Activated naive CD4-positive, alpha-beta T cell treated with anti-CD3 and anti-CD28 coated beads for 36 hours (primary cell): ENCODE measurements at regions of chr12 and their contacts with region 1.

Region 1: DNA sequence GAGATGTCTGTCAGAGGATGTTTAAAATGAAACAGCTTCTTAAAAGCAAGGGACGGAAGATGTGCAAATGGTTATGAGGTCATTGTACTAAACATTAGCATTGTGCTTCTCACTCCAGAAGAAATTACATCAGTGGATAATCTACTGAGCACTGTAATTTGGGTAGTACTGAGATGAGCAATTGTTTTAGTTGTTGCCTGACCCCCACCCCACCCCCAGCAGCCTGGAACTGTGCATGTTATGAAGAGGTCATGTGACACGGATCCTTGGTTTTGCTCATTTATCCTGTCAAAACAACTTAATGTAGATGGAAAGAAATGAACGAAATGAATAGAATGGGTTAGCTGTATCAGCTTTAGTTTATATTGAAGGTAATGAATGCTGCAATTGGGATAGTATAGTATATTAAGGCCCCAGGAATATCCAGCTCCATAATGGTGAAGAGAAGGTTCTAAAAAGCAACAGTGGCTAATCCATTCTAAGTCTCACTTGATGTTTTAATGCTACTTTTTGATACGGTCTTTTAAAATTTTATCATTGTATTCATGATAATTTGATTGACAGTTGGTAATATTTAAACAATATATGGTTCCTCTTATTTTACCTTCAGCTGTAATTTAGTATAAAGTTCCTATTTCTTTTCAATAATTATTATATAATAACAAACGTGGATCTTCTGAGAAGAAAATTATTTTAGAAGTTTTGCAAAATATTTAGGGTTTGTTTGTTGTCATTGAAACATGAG is 58.5 kb downstream of the WNK1 start:
- DNase-seq: peak; percentile 77
- H3K4me3 Mint-ChIP-seq: no peak overlapping the region
- H3K27ac Mint-ChIP-seq: peak overlapping the region; percentile 54
- H3K4me1 Mint-ChIP-seq: peaks cover 64% of the 10 kb centered on the region
- H3K27me3 Mint-ChIP-seq: no peaks in the 10 kb centered on the region

Region 2: GRCh38 chr12:569803-570434 is 240.9 kb before region 1 on chr12:
- CTCF ChIA-PET with region 1: interaction called, 50 read pairs
- intact Hi-C with region 1: loop called (anchors 1 kb)
- DNase-seq: peak; percentile 91
- H3K4me3 Mint-ChIP-seq: peak overlapping the region; percentile 80
- H3K27ac Mint-ChIP-seq: no peak overlapping the region
- H3K4me1 Mint-ChIP-seq: peaks cover 58% of the 10 kb centered on the region
- H3K27me3 Mint-ChIP-seq: no peaks in the 10 kb centered on the region

Region 3: DNA sequence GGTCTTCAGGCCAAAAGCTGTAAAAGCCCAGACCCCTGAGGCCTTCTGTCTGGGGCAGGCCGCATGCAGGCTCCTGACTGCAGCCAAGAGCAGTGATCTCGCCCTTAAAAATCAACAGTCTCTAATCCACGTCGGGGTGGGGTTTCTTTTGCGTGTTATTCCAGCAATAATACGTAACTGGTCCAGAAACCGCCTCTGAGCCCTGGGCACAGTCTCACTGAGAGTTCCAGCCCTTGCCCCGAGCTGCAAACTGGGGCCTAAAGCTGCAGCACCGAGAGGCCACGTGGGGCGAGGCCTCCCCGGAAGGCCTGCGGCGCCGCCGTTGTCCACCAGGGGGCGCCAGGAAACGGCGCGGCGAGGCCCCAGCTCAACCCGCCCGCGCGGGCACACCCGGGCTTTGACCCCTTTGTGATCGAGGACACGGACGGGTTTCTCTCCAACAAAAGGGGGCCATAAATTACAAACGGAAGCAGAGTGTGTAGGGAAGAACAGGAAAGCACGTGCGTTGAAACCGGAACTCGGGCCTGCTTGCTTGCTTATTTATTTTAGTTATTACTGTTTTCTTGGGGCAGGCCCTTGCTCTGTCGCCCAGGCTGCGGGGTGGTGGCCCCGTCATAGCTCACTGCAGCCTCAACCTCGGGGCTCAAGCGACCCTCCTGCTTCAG is 234.8 kb before region 1 on chr12:
- CTCF ChIA-PET with region 1: interaction called, 50 read pairs
- intact Hi-C with region 1: loop called (anchors 1 kb)
- DNase-seq: peak; percentile 80
- H3K4me3 Mint-ChIP-seq: peak overlapping the region; percentile 14
- H3K27ac Mint-ChIP-seq: no peak overlapping the region
- H3K4me1 Mint-ChIP-seq: peaks cover 29% of the 10 kb centered on the region
- H3K27me3 Mint-ChIP-seq: no peaks in the 10 kb centered on the region

Region 4: GRCh38 chr12:614411-614970 is 196.4 kb before region 1 on chr12:
- CTCF ChIA-PET with region 1: interaction called, 76 read pairs
- intact Hi-C with region 1: loop called (anchors 1 kb)
- DNase-seq: peak; percentile 72
- H3K4me3 Mint-ChIP-seq: no peak overlapping the region
- H3K27ac Mint-ChIP-seq: no peak overlapping the region
- H3K4me1 Mint-ChIP-seq: peaks cover 30% of the 10 kb centered on the region
- H3K27me3 Mint-ChIP-seq: no peaks in the 10 kb centered on the region

Region 5: DNA sequence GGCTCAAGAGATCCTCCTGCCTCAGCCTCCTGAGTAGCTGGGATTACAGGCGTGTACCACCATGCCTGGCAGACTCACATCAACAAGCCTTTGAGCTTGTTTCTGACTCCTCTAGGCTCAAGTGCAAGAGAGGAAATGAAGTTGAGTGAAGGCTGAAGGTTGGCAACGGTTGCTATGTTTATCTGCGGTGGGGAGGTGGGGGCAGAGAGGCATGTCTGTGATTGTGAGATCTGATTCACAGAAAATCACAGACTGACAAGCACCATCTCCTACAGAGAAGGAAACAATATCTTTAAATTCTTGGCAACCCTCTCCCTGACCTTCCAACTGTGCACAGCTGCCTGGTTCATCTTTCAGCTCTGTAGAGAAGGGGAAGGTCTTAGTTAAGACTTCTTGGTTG is 125.5 kb before region 1 on chr12:
- CTCF ChIA-PET with region 1: no interaction called
- intact Hi-C with region 1: loop called (anchors 5 kb)
- DNase-seq: peak; percentile 94
- H3K4me3 Mint-ChIP-seq: peak overlapping the region; percentile 36
- H3K27ac Mint-ChIP-seq: peak overlapping the region; percentile 82
- H3K4me1 Mint-ChIP-seq: peaks cover 36% of the 10 kb centered on the region
- H3K27me3 Mint-ChIP-seq: no peaks in the 10 kb centered on the region

Region 6: GRCh38 chr12:761256-761655 is 49.6 kb before region 1 on chr12:
- CTCF ChIA-PET with region 1: interaction called, 13 read pairs
- intact Hi-C with region 1: no loop called
- DNase-seq: no peak
- H3K4me3 Mint-ChIP-seq: no peak overlapping the region
- H3K27ac Mint-ChIP-seq: no peak overlapping the region
- H3K4me1 Mint-ChIP-seq: peaks cover 66% of the 10 kb centered on the region
- H3K27me3 Mint-ChIP-seq: no peaks in the 10 kb centered on the region

Region 7: GRCh38 chr12:795305-795704 is 15.5 kb before region 1 on chr12:
- CTCF ChIA-PET with region 1: interaction called, 4 read pairs
- intact Hi-C with region 1: loop called (anchors 2 kb)
- DNase-seq: peak; percentile 83
- H3K4me3 Mint-ChIP-seq: peak overlapping the region; percentile 31
- H3K27ac Mint-ChIP-seq: peak overlapping the region; percentile 88
- H3K4me1 Mint-ChIP-seq: peaks cover 77% of the 10 kb centered on the region
- H3K27me3 Mint-ChIP-seq: no peaks in the 10 kb centered on the region

Region 8: GRCh38 chr12:1041478-1041877 is 230.6 kb after region 1 on chr12:
- CTCF ChIA-PET with region 1: no interaction called
- intact Hi-C with region 1: no loop called
- DNase-seq: no peak
- H3K4me3 Mint-ChIP-seq: no peak overlapping the region
- H3K27ac Mint-ChIP-seq: no peak overlapping the region
- H3K4me1 Mint-ChIP-seq: peaks cover 3% of the 10 kb centered on the region
- H3K27me3 Mint-ChIP-seq: no peaks in the 10 kb centered on the region